Heart left ventricle (tissue), 16 donors: ENCODE measurements at regions of chr15 and their contacts with region 1.

Region 1: GRCh38 chr15:86743283-86743903 is 663.7 kb downstream of the AGBL1 start:
- DNase-seq: peak in 2 of 5 donors; percentile 17 to 49
- ATAC-seq: no peak
- H3K4me3 ChIP-seq: no peak overlapping the region
- H3K27ac ChIP-seq: no peak overlapping the region
- H3K4me1 ChIP-seq: no peaks in the 10 kb centered on the region
- H3K27me3 ChIP-seq: no peaks in the 10 kb centered on the region
- CTCF ChIP-seq: peak in 9 of 12 donors; percentile 30 to 56 (median 49)
- POLR2A ChIP-seq: no peak

Region 2: DNA sequence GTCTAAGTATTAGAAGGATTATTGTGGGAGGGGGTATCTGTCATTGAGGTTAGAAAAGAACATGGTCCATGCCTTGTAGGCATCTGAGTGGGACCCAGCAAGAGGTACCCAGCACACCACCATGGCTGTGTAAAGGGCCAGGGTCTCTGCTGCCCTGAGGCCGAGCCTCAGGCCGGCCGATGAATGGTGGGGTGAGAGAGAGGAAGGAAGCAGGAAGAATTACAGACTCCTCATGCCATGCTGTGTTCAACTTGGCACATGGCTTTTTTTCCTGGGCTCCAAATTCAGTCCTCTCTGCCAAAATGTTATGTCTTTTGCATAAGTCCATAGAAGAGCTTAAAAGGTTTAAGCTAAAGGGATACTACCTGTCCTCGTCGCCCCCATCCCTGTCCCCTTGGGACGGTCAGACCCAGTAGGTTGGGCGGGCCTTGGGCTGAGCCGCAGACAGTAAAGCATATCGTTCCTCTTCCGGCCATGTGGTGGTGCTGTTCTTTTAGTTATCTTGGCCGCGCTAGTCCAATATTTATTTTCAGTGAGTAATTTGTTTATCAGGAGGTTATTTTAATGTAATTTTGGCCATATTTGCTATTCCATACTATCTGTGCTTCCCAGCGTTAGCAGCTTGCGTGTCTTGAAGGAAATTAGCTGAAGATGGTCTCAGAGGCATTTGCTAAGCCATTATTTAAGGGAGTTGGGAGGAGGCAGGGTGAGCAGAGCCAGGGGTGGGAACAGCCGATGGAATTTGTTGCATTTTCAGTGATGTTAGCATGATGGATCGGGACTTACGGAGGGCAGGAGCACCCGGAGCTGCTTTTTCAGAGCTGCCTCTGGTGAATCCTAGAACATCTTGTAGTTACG is 511.3 kb before region 1 on chr15:
- intact Hi-C with region 1: loop called in 2 of 10 experiments (anchors 10 kb)
- DNase-seq: peak in 1 of 5 donors; percentile 27
- ATAC-seq: peak in 3 of 4 donors; percentile 42 to 71 (median 65)
- H3K4me3 ChIP-seq: peak overlapping the region in 2 of 12 donors; percentile 4 to 23
- H3K27ac ChIP-seq: no peak overlapping the region
- H3K4me1 ChIP-seq: peaks cover 0 to 7% (median 0%) of the 10 kb centered on the region in 12 donors
- H3K27me3 ChIP-seq: peaks cover 0 to 46% (median 15%) of the 10 kb centered on the region in 9 donors
- CTCF ChIP-seq: peak; percentile 46 to 72 (median 54)
- POLR2A ChIP-seq: no peak

Region 3: DNA sequence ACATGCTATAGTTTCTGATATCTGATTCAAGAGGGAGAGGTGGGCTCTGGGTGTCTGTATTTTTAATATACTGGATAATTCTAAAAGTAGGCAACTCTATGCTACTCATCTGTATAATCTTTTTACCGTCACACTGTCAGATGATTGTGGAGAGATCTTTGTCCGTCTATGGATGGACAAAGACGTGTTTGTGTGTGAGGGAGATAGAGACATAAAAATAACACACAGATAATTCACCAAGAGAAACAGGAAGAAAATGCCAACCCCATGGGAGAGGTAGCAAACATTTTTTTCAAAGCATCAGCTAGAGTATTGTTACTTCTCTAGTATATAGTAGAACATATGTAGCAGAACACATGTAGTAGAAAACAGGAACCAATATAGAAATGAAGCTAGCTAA is 317.6 kb before region 1 on chr15:
- intact Hi-C with region 1: no loop called
- DNase-seq: no peak
- ATAC-seq: no peak
- H3K4me3 ChIP-seq: no peak overlapping the region
- H3K27ac ChIP-seq: no peak overlapping the region
- H3K4me1 ChIP-seq: no peaks in the 10 kb centered on the region
- H3K27me3 ChIP-seq: no peaks in the 10 kb centered on the region
- CTCF ChIP-seq: no peak
- POLR2A ChIP-seq: no peak

Region 4: DNA sequence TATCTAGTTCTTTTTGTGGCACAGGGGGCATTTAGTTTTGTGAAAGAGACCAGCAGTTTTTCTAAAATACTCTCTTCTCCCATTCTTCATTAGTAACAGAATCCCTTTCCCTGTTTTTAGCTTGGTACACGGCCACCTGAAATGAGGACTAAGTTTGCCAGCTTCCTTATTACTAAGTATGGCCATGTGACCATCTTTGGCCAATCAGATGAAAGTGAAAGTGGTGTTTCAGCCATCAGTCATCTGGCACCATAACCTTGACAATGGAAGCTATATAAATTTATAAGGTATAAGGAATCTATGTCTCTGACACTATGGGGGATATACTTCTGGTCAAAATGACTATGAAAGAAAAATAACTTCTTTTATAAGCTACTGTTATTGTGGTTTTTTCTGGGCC is 93.3 kb before region 1 on chr15:
- intact Hi-C with region 1: no loop called
- DNase-seq: no peak
- ATAC-seq: no peak
- H3K4me3 ChIP-seq: no peak overlapping the region
- H3K27ac ChIP-seq: no peak overlapping the region
- H3K4me1 ChIP-seq: no peaks in the 10 kb centered on the region
- H3K27me3 ChIP-seq: no peaks in the 10 kb centered on the region
- CTCF ChIP-seq: no peak
- POLR2A ChIP-seq: no peak

Region 5: DNA sequence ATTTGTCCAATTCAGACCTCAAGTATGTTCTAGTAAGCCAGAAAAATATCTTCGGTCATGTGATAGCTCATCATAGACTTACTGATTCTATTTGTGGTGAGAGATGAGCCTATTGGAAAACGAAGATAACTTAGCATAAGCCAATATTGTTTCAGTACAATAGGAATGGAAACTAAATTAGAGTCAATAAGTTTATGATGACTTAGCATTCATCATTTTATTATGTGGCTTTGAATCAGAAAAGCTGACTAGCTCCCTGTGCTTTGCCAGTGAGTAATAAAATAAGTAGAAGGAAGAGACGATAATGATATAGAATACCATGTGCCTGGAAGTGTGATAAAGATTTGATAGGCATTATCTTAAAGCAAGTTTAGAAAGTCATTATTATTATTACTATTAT is 58.1 kb before region 1 on chr15:
- intact Hi-C with region 1: no loop called
- DNase-seq: no peak
- ATAC-seq: no peak
- H3K4me3 ChIP-seq: no peak overlapping the region
- H3K27ac ChIP-seq: no peak overlapping the region
- H3K4me1 ChIP-seq: no peaks in the 10 kb centered on the region
- H3K27me3 ChIP-seq: no peaks in the 10 kb centered on the region
- CTCF ChIP-seq: no peak
- POLR2A ChIP-seq: no peak